ENCODE measurements at regions of chr7 and their contacts with region 1.

Region 1: GRCh38 chr7:66952343-66953043 is 31.5 kb downstream of the TMEM248 start:
- DNase-seq: no peak
- H3K4me3 ChIP-seq: no peak overlapping the region
- H3K27ac ChIP-seq: peak overlapping the region; percentile 47
- H3K27me3 ChIP-seq: no peaks in the 10 kb centered on the region
- CTCF ChIP-seq: no peak

Region 2: DNA sequence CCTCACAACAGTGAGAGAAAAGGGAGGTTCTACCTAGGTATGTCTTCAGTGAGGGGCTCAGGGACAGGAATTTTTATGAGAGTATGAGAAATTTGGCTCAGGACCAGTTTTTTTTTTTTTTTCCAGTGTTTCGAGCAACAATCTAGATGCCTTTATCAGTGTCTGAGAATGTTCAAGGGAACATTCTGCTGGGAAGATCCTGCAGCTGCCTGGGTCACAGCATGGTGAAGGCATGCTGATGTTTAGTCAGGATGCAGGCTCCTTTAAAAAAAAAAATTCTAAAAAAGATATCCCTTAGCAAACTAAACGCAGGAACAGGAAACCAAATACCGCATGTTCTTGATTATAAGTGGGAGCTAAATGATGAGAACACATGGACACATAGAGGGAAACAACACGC is 11.9 kb after region 1 on chr7:
- CTCF ChIA-PET with region 1: no interaction called
- POLR2A ChIA-PET with region 1: interaction called, 12 read pairs
- DNase-seq: peak; percentile 21
- H3K4me3 ChIP-seq: no peak overlapping the region
- H3K27ac ChIP-seq: peak overlapping the region; percentile 21
- H3K27me3 ChIP-seq: no peaks in the 10 kb centered on the region
- CTCF ChIP-seq: no peak

Region 3: DNA sequence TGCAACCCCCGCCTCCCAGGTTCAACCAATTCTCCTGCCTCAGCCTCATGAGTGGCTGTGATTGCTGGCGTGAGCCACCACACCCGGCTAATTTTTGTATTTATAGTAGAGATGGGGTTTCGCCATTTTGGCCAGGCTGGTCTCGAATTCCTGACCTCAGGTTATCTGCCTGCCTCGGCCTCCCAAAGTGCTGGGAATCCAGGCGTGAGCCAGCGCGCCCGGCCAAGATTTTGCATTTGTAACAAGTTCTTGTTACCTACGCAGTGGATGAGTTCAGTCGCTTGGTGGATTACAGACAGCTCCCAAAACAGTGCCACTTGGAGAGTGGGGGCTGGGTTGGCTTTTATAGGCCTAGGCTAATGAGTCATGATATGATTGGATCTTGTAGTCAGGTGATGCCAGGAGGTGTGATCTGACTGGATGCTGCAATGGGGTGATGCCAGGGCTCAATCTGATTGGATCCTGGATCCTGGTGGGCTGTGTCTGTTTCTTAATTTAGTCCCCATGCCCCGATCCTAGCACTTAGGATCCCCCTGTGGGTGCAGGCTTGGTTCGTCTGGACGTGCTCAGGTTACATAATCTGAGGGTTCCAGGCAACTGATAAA is 22.6 kb after region 1 on chr7:
- CTCF ChIA-PET with region 1: no interaction called
- POLR2A ChIA-PET with region 1: no interaction called
- DNase-seq: no peak
- H3K4me3 ChIP-seq: no peak overlapping the region
- H3K27ac ChIP-seq: no peak overlapping the region
- H3K27me3 ChIP-seq: no peaks in the 10 kb centered on the region
- CTCF ChIP-seq: no peak

Measured in AG04450 (cell line).